H1 (cell line): ENCODE measurements at regions of chr11 and their contacts with region 1.

Region 1: GRCh38 chr11:95150946-95151684 is 61.5 kb downstream of the ENDOD1 start:
- DNase-seq: peak; percentile 91 to 93
- H3K4me3 ChIP-seq: peak overlapping the region; percentile 38 to 73 (median 60)
- H3K27ac ChIP-seq: no peak overlapping the region
- H3K4me1 ChIP-seq: peaks cover 3 to 5% (median 4%) of the 10 kb centered on the region in 4 experiments; a peak in 6 of 7 replicates
- H3K27me3 ChIP-seq: peaks cover 15 to 45% (median 36%) of the 10 kb centered on the region in 4 experiments
- CTCF ChIP-seq: peak; percentile 71 to 96 (median 91)
- EP300 ChIP-seq: no peak
- POLR2A ChIP-seq: no peak; a peak in 1 of 3 replicates
- RAD21 ChIP-seq: peak; percentile 20 to 86

Region 2: DNA sequence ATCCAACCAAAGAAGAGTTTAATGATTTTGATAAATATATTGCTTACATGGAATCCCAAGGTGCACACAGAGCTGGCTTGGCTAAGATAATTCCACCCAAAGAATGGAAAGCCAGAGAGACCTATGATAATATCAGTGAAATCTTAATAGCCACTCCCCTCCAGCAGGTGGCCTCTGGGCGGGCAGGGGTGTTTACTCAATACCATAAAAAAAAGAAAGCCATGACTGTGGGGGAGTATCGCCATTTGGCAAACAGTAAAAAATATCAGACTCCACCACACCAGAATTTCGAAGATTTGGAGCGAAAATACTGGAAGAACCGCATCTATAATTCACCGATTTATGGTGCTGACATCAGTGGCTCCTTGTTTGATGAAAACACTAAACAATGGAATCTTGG is 153.7 kb before region 1 on chr11:
- CTCF ChIA-PET with region 1: no interaction called
- POLR2A ChIA-PET with region 1: no interaction called
- DNase-seq: no peak
- H3K4me3 ChIP-seq: no peak overlapping the region
- H3K27ac ChIP-seq: no peak overlapping the region
- H3K4me1 ChIP-seq: no peaks in the 10 kb centered on the region
- H3K27me3 ChIP-seq: no peaks in the 10 kb centered on the region
- CTCF ChIP-seq: no peak
- EP300 ChIP-seq: no peak
- POLR2A ChIP-seq: no peak
- RAD21 ChIP-seq: no peak; a peak in 1 of 4 replicates

Region 3: DNA sequence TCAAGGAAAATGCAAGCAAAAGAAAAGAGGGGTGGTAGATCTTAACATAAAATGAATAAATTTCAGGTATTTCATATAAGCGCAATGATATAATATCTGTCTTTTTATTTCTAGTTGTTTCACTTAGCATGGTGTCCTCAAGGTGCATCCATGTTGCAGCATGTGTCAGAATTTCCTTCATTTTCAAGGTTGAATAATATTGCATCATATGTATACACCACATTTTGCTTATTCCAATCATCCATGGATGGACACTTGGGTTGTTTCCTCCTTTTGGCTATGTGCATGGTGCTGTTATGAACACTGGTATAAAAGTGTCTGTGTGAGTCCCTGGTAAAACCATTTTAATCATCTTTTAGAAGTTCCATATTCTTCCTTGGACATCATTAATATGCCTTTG is 108.9 kb before region 1 on chr11:
- CTCF ChIA-PET with region 1: no interaction called
- POLR2A ChIA-PET with region 1: no interaction called
- DNase-seq: no peak
- H3K4me3 ChIP-seq: no peak overlapping the region
- H3K27ac ChIP-seq: no peak overlapping the region
- H3K4me1 ChIP-seq: no peaks in the 10 kb centered on the region
- H3K27me3 ChIP-seq: no peaks in the 10 kb centered on the region; a peak in 1 of 7 replicates
- CTCF ChIP-seq: no peak
- EP300 ChIP-seq: no peak
- POLR2A ChIP-seq: no peak
- RAD21 ChIP-seq: no peak

Region 4: GRCh38 chr11:95089620-95090542 is 61.2 kb before region 1 on chr11 and contains the start of gene ENDOD1:
- CTCF ChIA-PET with region 1: interaction called, 35 read pairs
- POLR2A ChIA-PET with region 1: interaction called, 3 read pairs
- DNase-seq: peak in 1 of 2 experiments; percentile 83
- H3K4me3 ChIP-seq: peak within 1 kb of the TSS; percentile 72 to 96 (median 86)
- H3K27ac ChIP-seq: no peak within 1 kb of the TSS
- H3K4me1 ChIP-seq: peaks cover 0 to 6% (median 3%) of the 10 kb centered on the region in 4 experiments; a peak in 6 of 7 replicates
- H3K27me3 ChIP-seq: peaks cover 4 to 32% (median 25%) of the 10 kb centered on the region in 4 experiments
- CTCF ChIP-seq: no peak
- EP300 ChIP-seq: no peak
- POLR2A ChIP-seq: 0 out of 3 replicates have a peak, but pooled peaks of 1 of the 2 experiments have one; percentile 40
- RAD21 ChIP-seq: peak in 1 of 2 experiments; percentile 0; a peak in 1 of 4 replicates
- total RNA-seq, gene ENDOD1: 2.2 and 2.5 TPM in 2 replicates

Region 5: GRCh38 chr11:95119374-95120060 is 31.6 kb before region 1 on chr11:
- CTCF ChIA-PET with region 1: no interaction called
- POLR2A ChIA-PET with region 1: no interaction called
- DNase-seq: no peak
- H3K4me3 ChIP-seq: no peak overlapping the region
- H3K27ac ChIP-seq: no peak overlapping the region
- H3K4me1 ChIP-seq: no peaks in the 10 kb centered on the region
- H3K27me3 ChIP-seq: no peaks in the 10 kb centered on the region
- CTCF ChIP-seq: no peak
- EP300 ChIP-seq: no peak
- POLR2A ChIP-seq: no peak
- RAD21 ChIP-seq: no peak

Region 6: DNA sequence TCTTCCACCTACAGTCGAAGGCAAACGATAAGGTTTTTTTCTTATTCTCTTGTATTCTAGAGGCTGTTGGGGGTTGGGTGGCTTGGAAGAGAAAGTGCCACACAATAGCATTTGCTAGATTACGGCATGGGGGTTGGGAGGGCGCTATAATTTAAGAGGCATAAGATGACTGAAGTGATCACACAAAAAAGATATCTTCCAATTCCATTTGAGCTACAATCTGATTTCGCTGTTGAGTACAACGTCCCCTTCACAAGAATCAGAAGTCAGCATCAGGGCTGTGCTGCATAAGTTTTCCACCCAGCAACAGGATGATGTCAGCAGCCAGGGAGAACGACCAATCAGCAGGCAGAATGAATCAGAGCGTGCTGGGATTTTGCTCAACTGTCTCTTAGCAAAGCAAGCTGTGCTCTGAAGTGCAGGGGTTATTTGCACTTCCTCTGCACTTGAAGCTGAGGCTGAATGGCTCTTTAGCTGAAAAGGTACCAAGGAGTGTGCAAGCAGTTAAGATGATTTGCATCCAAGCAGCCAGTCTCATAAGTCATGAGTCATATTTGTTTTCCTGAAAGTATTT is 103.1 kb after region 1 on chr11:
- CTCF ChIA-PET with region 1: interaction called, 12 read pairs
- POLR2A ChIA-PET with region 1: no interaction called
- DNase-seq: peak in 1 of 2 experiments; percentile 66
- H3K4me3 ChIP-seq: no peak overlapping the region
- H3K27ac ChIP-seq: peak overlapping the region; percentile 49
- H3K4me1 ChIP-seq: peaks cover 15 to 36% (median 22%) of the 10 kb centered on the region in 4 experiments; a peak in 6 of 7 replicates
- H3K27me3 ChIP-seq: no peaks in the 10 kb centered on the region
- CTCF ChIP-seq: no peak
- EP300 ChIP-seq: no peak
- POLR2A ChIP-seq: 0 out of 3 replicates have a peak, but pooled peaks of 1 of the 2 experiments have one; percentile 48
- RAD21 ChIP-seq: no peak

Region 7: DNA sequence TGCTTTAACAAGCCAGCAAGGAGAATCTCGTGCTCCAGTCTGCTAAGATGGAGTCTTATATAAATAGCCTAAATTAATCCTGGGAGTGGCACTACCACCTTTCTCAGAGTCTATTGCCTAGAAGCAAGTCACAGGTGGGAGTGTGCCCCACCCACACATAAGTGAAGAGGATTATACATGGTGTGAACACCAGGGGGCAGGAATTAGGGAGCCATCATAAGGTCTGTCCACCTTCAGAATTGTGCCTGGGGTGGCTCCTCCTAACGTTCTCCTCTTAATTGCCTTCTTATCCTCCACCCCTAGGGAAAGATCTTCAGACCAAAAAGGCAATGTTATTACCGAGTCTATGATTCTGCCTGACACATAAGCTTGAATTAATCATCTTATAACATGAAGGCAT is 356.7 kb after region 1 on chr11:
- CTCF ChIA-PET with region 1: interaction called, 14 read pairs
- POLR2A ChIA-PET with region 1: no interaction called
- DNase-seq: no peak
- H3K4me3 ChIP-seq: no peak overlapping the region
- H3K27ac ChIP-seq: no peak overlapping the region
- H3K4me1 ChIP-seq: no peaks in the 10 kb centered on the region
- H3K27me3 ChIP-seq: peaks cover 0 to 1% (median 0%) of the 10 kb centered on the region in 4 experiments; a peak in 1 of 7 replicates
- CTCF ChIP-seq: peak in 2 of 3 experiments; percentile 6 to 21; a peak in 2 of 4 replicates
- EP300 ChIP-seq: no peak
- POLR2A ChIP-seq: no peak
- RAD21 ChIP-seq: peak in 1 of 2 experiments; percentile 10; a peak in 1 of 4 replicates

Region 8: DNA sequence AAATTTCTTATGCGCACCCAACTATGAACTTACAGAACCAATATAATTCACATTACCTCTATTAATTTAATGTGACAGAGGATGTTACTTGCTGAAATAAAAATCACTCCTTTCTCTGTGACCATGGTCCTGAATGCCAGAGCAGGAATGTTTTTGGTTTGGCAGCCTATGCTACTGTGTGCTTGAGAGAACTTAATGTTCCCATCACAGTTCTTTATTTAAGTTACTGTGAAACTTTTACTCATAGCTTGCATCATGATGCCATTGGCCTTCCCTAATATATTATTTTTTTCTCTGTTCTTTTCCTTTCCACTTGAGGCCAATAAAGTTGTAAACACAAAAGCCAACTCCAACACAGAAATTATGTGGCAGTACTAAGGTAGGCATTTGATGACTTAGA is 496.2 kb after region 1 on chr11:
- CTCF ChIA-PET with region 1: interaction called, 10 read pairs
- POLR2A ChIA-PET with region 1: interaction called, 3 read pairs
- DNase-seq: no peak
- H3K4me3 ChIP-seq: no peak overlapping the region
- H3K27ac ChIP-seq: no peak overlapping the region
- H3K4me1 ChIP-seq: no peaks in the 10 kb centered on the region
- H3K27me3 ChIP-seq: peaks cover 0 to 1% (median 0%) of the 10 kb centered on the region in 4 experiments; a peak in 1 of 7 replicates
- CTCF ChIP-seq: no peak
- EP300 ChIP-seq: no peak
- POLR2A ChIP-seq: no peak
- RAD21 ChIP-seq: no peak

Region 9: DNA sequence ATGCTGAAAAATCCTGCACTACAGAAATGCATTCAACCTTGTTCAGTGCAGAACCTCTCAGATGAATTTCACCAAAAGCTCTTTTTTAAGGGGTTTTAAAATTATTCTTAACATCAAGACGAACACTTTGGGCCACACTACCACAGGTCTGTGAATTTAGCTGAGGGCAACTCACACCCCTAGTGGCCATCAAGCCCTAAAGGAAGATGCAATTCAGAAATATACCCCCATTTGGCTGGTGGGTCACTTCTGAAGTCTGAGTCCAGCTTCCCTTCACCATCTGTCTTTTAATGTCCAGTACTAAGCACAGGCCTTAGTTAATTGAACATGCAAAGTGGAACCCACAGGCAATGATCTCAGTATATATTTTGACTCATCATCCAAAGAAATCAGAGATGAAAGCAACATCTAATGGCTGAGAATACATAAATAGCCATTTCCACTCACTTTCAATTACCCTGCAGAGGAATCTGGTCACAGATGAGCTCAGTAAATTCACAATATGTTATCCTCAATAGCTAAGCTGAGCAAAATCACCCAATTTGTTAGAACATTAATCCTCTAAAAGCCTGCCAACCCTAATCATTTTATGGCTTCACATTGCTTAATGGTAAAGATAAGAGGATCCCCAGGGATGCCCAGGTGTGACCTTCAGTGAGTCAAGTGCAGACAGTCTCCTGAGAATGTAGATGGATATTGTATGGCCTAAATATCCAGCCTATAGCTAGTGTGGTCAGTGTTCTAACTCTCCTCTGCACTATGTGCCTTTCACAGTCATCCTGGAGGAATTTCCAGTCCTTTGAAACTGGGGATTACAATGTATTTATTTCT is 588.2 kb after region 1 on chr11:
- CTCF ChIA-PET with region 1: interaction called, 15 read pairs
- POLR2A ChIA-PET with region 1: interaction called, 3 read pairs
- DNase-seq: no peak
- H3K4me3 ChIP-seq: no peak overlapping the region
- H3K27ac ChIP-seq: no peak overlapping the region
- H3K4me1 ChIP-seq: no peaks in the 10 kb centered on the region
- H3K27me3 ChIP-seq: no peaks in the 10 kb centered on the region
- CTCF ChIP-seq: peak; percentile 25 to 45 (median 28); a peak in 3 of 4 replicates
- EP300 ChIP-seq: no peak
- POLR2A ChIP-seq: no peak
- RAD21 ChIP-seq: peak; percentile 37 to 46; a peak in 3 of 4 replicates